CD14-positive monocyte (primary cell): ENCODE measurements at regions of chr5 and their contacts with region 1.

Region 1: DNA sequence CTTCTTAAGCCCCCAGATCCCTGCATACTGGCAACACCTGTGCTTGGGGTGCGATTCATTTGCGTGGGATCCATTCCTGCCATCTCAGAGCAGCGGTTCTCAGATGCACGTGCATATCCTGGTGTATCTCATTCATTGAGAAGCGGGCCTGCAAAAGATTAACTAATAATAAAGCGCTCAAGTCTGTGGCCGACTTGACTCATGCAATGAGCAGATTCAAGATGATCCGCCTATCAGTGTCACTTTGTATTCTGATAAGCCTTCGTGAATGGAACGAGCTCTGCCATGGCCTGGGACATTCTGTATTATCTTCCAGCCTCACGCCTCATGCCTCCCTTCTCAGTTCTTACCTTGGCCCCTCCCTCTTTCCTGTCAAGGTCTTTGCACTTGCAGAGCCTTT is 22.3 kb downstream of the C1QTNF2 start:
- DNase-seq: no peak
- H3K4me3 ChIP-seq: no peak overlapping the region
- H3K4me3 Mint-ChIP-seq: no peak overlapping the region
- H3K27ac ChIP-seq: no peak overlapping the region
- H3K27ac Mint-ChIP-seq: no peak overlapping the region
- H3K4me1 ChIP-seq: no peaks in the 10 kb centered on the region
- H3K4me1 Mint-ChIP-seq: peaks cover 2% of the 10 kb centered on the region
- H3K27me3 ChIP-seq: no peaks in the 10 kb centered on the region
- H3K27me3 Mint-ChIP-seq: peaks cover 0 to 5% (median 0%) of the 10 kb centered on the region in 3 donors
- CTCF ChIP-seq: no peak

Region 2: DNA sequence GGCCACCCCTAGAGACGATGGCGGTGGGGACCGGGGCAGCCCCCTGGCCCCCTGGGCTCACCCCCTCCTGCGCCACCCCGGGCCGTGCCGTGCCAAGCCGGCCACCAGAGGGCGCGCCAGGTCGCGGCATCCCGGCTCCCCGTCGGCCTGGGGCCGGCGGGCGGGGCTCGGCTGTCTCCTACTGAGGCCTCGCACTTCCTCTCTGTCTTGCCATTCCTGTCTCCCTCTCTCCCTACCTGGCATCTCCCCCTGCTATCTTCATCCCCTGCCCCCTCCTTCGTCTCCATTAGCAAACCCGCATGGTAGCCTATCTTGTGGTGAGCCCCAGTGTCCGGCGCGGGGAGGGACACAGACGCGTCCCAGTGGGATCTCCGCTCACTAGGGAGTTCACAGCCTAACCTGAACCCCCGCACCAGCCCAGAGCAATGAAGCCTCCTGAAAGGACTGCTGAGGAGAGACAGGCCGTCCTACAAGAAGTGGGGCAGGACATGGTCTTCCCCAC is 148.6 kb before region 1 on chr5:
- intact Hi-C with region 1: loop called (anchors 1 to 2 kb)
- DNase-seq: peak; percentile 42 to 68 (median 61)
- H3K4me3 ChIP-seq: peak overlapping the region in 2 of 3 experiments; percentile 7 to 60
- H3K4me3 Mint-ChIP-seq: peak overlapping the region; percentile 69 to 84
- H3K27ac ChIP-seq: no peak overlapping the region
- H3K27ac Mint-ChIP-seq: no peak overlapping the region
- H3K4me1 ChIP-seq: peaks cover 9 to 10% of the 10 kb centered on the region in 2 donors
- H3K4me1 Mint-ChIP-seq: peaks cover 15% of the 10 kb centered on the region
- H3K27me3 ChIP-seq: no peaks in the 10 kb centered on the region
- H3K27me3 Mint-ChIP-seq: peaks cover 6 to 15% (median 13%) of the 10 kb centered on the region in 3 donors
- CTCF ChIP-seq: peak; percentile 97